PC-9 (cell line): ENCODE measurements at regions of chr7 and their contacts with region 1.

Region 1: DNA sequence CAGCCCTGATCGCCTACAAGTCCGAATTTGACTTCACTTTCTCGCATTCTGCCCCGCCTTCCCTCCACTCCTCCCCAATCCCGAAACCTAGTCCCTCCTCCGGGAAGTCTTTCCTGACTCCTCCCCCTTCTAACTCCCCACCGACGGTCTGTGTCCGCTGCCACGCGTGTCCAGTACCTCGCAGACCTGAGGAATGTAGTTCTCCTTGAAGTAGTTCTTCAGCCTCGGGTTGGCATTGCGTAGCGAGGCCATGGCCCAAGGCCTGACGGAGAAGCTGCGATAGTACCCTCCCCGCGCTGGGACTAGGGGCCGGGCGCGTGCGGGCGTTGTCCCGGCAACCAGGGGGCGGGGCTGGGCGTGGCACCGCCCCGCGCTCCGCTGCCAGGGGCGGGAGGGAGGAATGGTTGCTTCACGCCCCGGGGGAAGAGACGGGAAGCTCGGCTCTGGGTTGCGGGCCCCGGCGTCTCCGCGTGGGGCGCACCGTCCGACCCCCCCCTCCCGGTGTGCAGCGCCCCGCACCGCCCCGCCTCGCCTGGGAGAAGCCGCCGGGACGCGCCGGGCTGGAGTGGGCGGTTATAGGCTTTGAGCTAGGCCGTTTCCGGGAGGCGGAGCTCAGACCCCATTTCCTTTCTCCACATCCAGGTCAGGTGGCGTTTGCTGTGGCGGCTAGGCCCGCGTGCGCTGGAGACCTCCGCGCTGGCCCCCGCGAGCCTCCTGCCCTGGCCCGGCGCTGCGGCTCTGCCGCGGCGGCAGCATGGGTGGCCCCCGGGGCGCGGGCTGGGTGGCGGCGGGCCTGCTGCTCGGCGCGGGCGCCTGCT is at the starts of genes ARMC10 and FBXL13:
- DNase-seq: peak; percentile 78 to 95
- H3K4me3 ChIP-seq: peak within 1 kb of the TSS; percentile 92
- H3K27ac ChIP-seq: peak within 1 kb of the TSS; percentile 72
- H3K4me1 ChIP-seq: peaks cover 26% of the 10 kb centered on the region
- H3K27me3 ChIP-seq: no peaks in the 10 kb centered on the region
- CTCF ChIP-seq: no peak
- total RNA-seq, gene ARMC10: 53.3 and 66.0 TPM in 2 replicates
- total RNA-seq, gene FBXL13: 10.4 and 19.4 TPM in 2 replicates

Region 2: DNA sequence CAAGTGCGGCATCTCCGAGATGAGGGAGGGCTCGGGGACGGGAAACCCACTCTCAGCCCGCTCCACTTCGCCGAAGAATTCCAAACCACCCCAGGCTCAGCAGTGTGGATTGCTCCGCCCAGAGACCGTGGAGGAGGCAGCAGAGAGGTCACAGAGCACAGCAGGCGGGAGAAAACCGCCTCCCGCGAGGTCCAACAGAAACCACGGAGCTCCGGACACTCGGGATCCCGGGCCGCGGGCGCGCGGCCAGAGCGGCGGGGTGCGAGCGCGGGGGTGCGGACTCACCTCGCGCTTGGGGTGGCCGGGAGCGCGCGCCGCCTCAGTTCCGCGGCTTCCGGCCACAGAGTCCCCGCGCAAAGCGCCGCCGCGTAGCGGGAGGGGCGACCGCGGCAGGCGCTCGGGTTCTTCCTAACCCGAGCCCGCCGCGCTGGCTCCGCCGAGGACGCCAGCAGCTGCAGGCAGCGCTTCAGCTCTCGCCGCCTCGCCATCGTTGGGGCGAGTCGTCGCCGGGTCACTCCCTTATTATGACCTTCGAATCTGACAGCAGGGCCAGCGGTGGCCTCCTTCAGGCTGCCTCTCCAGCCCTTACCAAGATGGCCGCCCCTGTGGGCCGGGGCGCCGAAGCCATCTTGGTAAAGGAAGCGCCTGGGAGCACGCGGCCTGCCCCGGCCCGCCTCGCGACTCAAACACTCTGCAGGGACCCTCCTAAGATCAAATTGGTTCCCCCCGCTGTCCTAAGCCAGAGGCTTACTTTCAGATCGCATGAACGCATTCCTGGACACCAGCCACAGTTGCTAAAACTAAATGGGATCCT is 74.5 kb after region 1 on chr7 and contains the start of gene NAPEPLD:
- CTCF ChIA-PET with region 1: no interaction called
- POLR2A ChIA-PET with region 1: interaction called, 5 read pairs
- intact Hi-C with region 1: loop called (anchors 2 kb)
- DNase-seq: peak; percentile 55 to 86
- H3K4me3 ChIP-seq: peak within 1 kb of the TSS; percentile 77
- H3K27ac ChIP-seq: peak within 1 kb of the TSS; percentile 82
- H3K4me1 ChIP-seq: peaks cover 35% of the 10 kb centered on the region
- H3K27me3 ChIP-seq: no peaks in the 10 kb centered on the region
- CTCF ChIP-seq: no peak
- total RNA-seq, gene NAPEPLD: 22.6 TPM in 2 replicates

Region 3: DNA sequence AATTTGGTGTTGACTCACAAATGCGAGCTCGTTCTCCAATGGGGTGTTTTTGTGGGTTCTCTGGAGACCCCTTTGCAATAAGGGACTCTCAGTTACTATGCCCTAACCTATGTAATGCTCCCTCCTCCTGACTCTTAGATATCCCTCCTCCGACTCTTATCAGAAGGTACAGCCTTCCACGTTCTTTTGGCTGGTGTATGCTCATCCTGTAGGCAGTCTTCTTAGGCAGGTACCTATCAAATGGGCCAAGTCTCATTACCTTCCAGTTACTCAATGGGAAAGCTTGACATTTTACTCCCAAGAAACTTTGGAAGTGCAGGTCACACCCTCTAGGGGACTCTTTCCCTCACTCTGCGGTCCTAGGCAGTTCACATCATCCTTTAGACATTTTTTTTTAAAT is 338.7 kb after region 1 on chr7:
- CTCF ChIA-PET with region 1: no interaction called
- POLR2A ChIA-PET with region 1: no interaction called
- intact Hi-C with region 1: loop called (anchors 5 kb)
- DNase-seq: no peak
- H3K4me3 ChIP-seq: no peak overlapping the region
- H3K27ac ChIP-seq: no peak overlapping the region
- H3K4me1 ChIP-seq: no peaks in the 10 kb centered on the region
- H3K27me3 ChIP-seq: no peaks in the 10 kb centered on the region
- CTCF ChIP-seq: no peak

Region 4: DNA sequence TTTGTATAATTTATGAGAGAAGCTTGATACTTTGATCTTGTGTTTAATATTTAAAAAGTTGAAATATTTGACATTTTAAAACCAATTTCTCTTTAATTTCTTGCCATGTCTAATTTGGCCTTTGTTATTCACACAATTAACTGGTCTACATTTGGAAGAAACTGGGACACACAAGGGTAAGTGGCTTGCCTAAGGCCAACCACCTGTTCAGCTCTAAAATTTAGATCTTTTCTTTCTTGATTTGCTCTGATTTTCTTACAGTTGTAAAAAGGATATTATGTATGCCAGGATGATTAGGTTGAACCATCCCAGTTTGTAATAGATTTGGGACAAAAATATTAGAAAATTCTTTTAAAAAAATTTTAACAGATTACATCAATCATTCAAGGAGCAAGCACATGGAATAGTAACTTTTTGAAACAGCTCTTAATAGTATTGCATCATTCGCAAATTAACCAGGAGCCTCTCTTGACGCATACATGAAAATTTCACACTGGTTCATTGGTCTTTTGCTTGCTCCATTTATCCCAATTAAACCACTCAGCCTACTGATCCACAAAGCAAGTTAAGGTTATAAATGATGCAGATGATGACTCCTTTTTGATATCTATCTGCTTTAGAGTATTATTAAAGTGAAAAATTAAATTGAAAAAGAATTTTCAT is 593.7 kb after region 1 on chr7:
- CTCF ChIA-PET with region 1: no interaction called
- POLR2A ChIA-PET with region 1: interaction called, 10 read pairs
- intact Hi-C with region 1: no loop called
- DNase-seq: no peak
- H3K4me3 ChIP-seq: no peak overlapping the region
- H3K27ac ChIP-seq: no peak overlapping the region
- H3K4me1 ChIP-seq: no peaks in the 10 kb centered on the region
- H3K27me3 ChIP-seq: no peaks in the 10 kb centered on the region
- CTCF ChIP-seq: no peak